GM12878 (cell line): ENCODE measurements at regions of chr10 and their contacts with region 1.

Region 1: GRCh38 chr10:102678842-102679289 is 34.6 kb downstream of the TRIM8 start:
- DNase-seq: no peak
- ATAC-seq: peak; percentile 82
- H3K4me3 ChIP-seq: no peak overlapping the region
- H3K27ac ChIP-seq: no peak overlapping the region
- H3K4me1 ChIP-seq: peaks cover 26% of the 10 kb centered on the region
- H3K27me3 ChIP-seq: no peaks in the 10 kb centered on the region
- CTCF ChIP-seq: peak; percentile 50 to 85 (median 74)
- EP300 ChIP-seq: no peak
- POLR2A ChIP-seq: no peak
- RAD21 ChIP-seq: peak; percentile 57

Region 2: DNA sequence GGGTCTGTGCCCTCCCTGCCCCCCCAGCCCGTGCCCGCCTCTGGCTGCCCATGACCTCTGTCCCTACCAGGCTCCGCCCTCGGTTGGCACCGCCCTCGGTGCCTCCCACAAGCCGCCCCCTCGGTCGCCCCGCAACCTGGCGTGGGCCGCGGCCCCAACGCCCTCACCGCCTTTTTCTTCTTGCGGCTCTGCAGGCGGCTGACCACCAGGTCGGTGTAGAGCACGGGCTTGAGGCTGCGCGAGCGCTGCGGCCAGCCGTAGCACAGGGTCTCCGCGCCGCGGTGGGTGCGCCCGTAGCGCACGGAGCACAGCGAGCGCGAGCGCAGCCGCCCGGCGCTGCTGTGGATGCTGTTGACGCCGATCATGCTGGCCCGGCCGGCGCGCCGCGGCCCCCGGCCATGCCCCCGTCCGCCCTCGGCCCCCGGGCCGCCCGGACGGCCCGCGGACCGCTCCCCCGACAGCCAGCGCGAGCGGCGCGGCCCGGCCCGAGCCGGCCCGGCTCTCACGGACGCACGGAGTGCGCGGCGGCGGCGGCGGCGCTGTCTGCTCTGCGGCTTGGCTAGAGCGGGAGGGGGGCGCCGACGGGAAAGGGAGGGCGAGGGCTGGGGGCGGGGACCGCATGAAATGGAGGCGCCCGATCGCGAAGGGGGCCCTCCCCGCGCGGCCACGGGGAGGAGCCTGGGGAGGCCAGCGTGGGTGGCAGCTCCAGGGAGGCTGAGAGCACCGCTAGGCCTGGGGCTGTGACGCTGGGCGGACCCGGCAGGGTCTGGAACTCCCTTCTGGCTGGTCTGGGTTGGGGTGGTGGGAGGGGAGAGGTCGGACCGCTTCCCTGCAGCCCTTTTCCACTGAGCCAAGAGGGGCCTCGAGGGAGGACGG is 269.9 kb before region 1 on chr10:
- CTCF ChIA-PET with region 1: no interaction called
- POLR2A ChIA-PET with region 1: no interaction called
- RAD21 ChIA-PET with region 1: no interaction called
- SMC1A ChIA-PET with region 1: no interaction called
- in situ Hi-C with region 1: no loop called
- intact Hi-C with region 1: no loop called
- DNase-seq: no peak
- ATAC-seq: 0 out of 3 replicates have a peak, but pooled peaks have one; percentile 8
- H3K4me3 ChIP-seq: peak overlapping the region; percentile 22; the same call in 1 of the 2 replicates
- H3K27ac ChIP-seq: no peak overlapping the region
- H3K4me1 ChIP-seq: peaks cover 9% of the 10 kb centered on the region
- H3K27me3 ChIP-seq: peaks cover 17 to 21% of the 10 kb centered on the region in 2 experiments
- CTCF ChIP-seq: no peak
- EP300 ChIP-seq: no peak
- POLR2A ChIP-seq: peak; percentile 50; the same call in 1 of the 2 replicates
- RAD21 ChIP-seq: no peak

Region 3: GRCh38 chr10:102604379-102604960 is 74.4 kb before region 1 on chr10:
- CTCF ChIA-PET with region 1: interaction called, 17 read pairs
- POLR2A ChIA-PET with region 1: interaction called, 16 read pairs
- RAD21 ChIA-PET with region 1: interaction called, 6 read pairs
- SMC1A ChIA-PET with region 1: interaction called, 7 read pairs
- in situ Hi-C with region 1: no loop called
- intact Hi-C with region 1: no loop called
- DNase-seq: no peak
- ATAC-seq: peak; percentile 62
- H3K4me3 ChIP-seq: no peak overlapping the region
- H3K27ac ChIP-seq: no peak overlapping the region
- H3K4me1 ChIP-seq: peaks cover 6% of the 10 kb centered on the region
- H3K27me3 ChIP-seq: no peaks in the 10 kb centered on the region
- CTCF ChIP-seq: no peak
- EP300 ChIP-seq: no peak
- POLR2A ChIP-seq: no peak
- RAD21 ChIP-seq: no peak

Region 4: GRCh38 chr10:102641880-102642735 is 36.8 kb before region 1 on chr10:
- CTCF ChIA-PET with region 1: interaction called, 128 read pairs
- POLR2A ChIA-PET with region 1: interaction called, 151 read pairs
- RAD21 ChIA-PET with region 1: interaction called, 57 read pairs
- SMC1A ChIA-PET with region 1: interaction called, 103 read pairs
- in situ Hi-C with region 1: no loop called
- intact Hi-C with region 1: no loop called
- DNase-seq: peak; percentile 90
- ATAC-seq: peak; percentile 69
- H3K4me3 ChIP-seq: peak overlapping the region; percentile 93
- H3K27ac ChIP-seq: peak overlapping the region; percentile 96
- H3K4me1 ChIP-seq: peaks cover 7% of the 10 kb centered on the region
- H3K27me3 ChIP-seq: no peaks in the 10 kb centered on the region
- CTCF ChIP-seq: no peak
- EP300 ChIP-seq: no peak
- POLR2A ChIP-seq: peak; percentile 91
- RAD21 ChIP-seq: no peak

Region 5: DNA sequence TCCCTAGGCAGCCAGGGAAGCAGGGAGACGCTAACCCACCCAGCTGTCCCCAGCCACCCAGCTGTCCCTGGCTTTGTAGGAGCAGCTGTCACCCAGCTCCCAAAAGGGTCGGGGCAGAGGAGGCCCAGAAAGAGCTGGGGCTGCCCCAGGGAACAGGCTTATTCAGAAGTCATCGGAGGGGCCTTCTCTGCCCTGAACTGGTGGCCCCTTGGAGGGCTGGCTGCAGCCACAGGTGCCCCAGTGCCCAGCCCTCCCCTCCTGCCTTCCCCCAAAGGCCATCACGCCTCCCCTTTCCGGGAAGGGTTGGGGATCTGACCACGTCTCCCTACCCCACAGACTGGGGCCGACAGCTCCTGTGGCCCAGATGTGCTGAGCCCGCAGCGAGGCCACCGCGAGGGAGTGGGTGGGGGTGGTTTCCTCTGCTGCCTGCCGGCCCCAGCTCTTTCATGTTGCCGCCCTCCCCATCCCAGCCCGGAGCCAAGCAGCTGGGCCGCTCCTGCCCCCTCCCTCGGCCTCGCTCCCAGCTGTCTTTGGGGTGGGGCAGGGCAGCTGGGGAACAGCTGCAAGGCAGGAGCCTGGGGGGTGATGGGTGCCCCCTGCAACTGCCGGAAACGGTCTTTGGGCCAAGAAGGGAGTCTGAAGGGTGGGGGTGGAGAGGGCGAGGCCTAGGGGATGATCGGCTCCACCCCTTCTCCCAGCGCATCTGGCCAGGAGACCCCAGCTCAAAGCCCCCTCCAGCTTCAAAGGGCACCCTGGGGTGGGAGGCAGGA is 17.8 kb before region 1 on chr10:
- CTCF ChIA-PET with region 1: interaction called, 128 read pairs
- POLR2A ChIA-PET with region 1: interaction called, 151 read pairs
- RAD21 ChIA-PET with region 1: interaction called, 65 read pairs
- SMC1A ChIA-PET with region 1: interaction called, 45 read pairs
- in situ Hi-C with region 1: no loop called
- intact Hi-C with region 1: no loop called
- DNase-seq: no peak
- ATAC-seq: peak; percentile 94
- H3K4me3 ChIP-seq: peak overlapping the region; percentile 27; the same call in 1 of the 2 replicates
- H3K27ac ChIP-seq: peak overlapping the region; percentile 83
- H3K4me1 ChIP-seq: peaks cover 22% of the 10 kb centered on the region
- H3K27me3 ChIP-seq: no peaks in the 10 kb centered on the region
- CTCF ChIP-seq: no peak
- EP300 ChIP-seq: peak in 1 of 2 experiments; percentile 73; a peak in 2 of 4 replicates
- POLR2A ChIP-seq: peak; percentile 82
- RAD21 ChIP-seq: peak; percentile 14; the same call in 1 of the 2 replicates

Region 6: DNA sequence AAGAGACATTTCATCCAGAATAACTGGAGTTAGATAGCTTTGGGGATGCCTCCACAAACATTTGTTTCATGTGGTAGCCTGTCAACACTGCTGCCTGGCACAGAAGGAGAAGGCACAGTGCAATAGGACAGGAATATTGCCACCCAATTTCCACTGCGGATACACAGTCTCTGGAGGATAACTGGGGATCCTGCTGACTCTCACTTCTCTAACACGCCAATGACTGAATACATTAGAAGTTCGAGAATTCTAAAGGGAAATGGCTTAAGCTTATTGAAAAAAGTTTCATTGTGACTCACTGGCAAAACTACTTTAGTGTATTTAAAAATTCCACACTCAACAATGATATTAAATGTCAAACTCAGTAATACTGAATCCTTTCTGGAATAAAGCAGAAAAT is 22.4 kb after region 1 on chr10:
- CTCF ChIA-PET with region 1: interaction called, 13 read pairs
- POLR2A ChIA-PET with region 1: interaction called, 12 read pairs
- RAD21 ChIA-PET with region 1: interaction called, 140 read pairs
- SMC1A ChIA-PET with region 1: interaction called, 32 read pairs
- in situ Hi-C with region 1: no loop called
- intact Hi-C with region 1: no loop called
- DNase-seq: no peak
- ATAC-seq: peak; percentile 65
- H3K4me3 ChIP-seq: no peak overlapping the region
- H3K27ac ChIP-seq: peak overlapping the region; percentile 24
- H3K4me1 ChIP-seq: peaks cover 6% of the 10 kb centered on the region
- H3K27me3 ChIP-seq: no peaks in the 10 kb centered on the region
- CTCF ChIP-seq: no peak
- EP300 ChIP-seq: no peak
- POLR2A ChIP-seq: no peak
- RAD21 ChIP-seq: no peak

Region 7: GRCh38 chr10:102845352-102845902 is 166.6 kb after region 1 on chr10:
- CTCF ChIA-PET with region 1: no interaction called
- POLR2A ChIA-PET with region 1: no interaction called
- RAD21 ChIA-PET with region 1: no interaction called
- SMC1A ChIA-PET with region 1: no interaction called
- in situ Hi-C with region 1: no loop called
- intact Hi-C with region 1: no loop called
- DNase-seq: no peak
- ATAC-seq: no peak
- H3K4me3 ChIP-seq: no peak overlapping the region
- H3K27ac ChIP-seq: no peak overlapping the region
- H3K4me1 ChIP-seq: no peaks in the 10 kb centered on the region
- H3K27me3 ChIP-seq: no peaks in the 10 kb centered on the region; a peak in 1 of 4 replicates
- CTCF ChIP-seq: no peak
- EP300 ChIP-seq: no peak
- POLR2A ChIP-seq: no peak
- RAD21 ChIP-seq: no peak

Region 8: GRCh38 chr10:102904346-102904745 is 225.5 kb after region 1 on chr10:
- CTCF ChIA-PET with region 1: interaction called, 44 read pairs
- POLR2A ChIA-PET with region 1: no interaction called
- RAD21 ChIA-PET with region 1: no interaction called
- SMC1A ChIA-PET with region 1: interaction called, 4 read pairs
- in situ Hi-C with region 1: no loop called
- intact Hi-C with region 1: no loop called
- DNase-seq: no peak
- ATAC-seq: no peak
- H3K4me3 ChIP-seq: no peak overlapping the region
- H3K27ac ChIP-seq: no peak overlapping the region
- H3K4me1 ChIP-seq: no peaks in the 10 kb centered on the region
- H3K27me3 ChIP-seq: no peaks in the 10 kb centered on the region
- CTCF ChIP-seq: no peak
- EP300 ChIP-seq: no peak
- POLR2A ChIP-seq: no peak
- RAD21 ChIP-seq: no peak